Heart left ventricle (tissue), 16 donors: ENCODE measurements at regions of chr2 and their contacts with region 1.

Region 1: GRCh38 chr2:43219383-43220228 is 6.8 kb downstream of the ZFP36L2 start:
- DNase-seq: peak; percentile 91 to 95 (median 93)
- ATAC-seq: peak; percentile 66 to 86 (median 80)
- H3K4me3 ChIP-seq: peak overlapping the region; percentile 11 to 97 (median 80)
- H3K27ac ChIP-seq: peak overlapping the region; percentile 96 to 99 (median 99)
- H3K4me1 ChIP-seq: peaks cover 6 to 83% (median 61%) of the 10 kb centered on the region in 12 donors
- H3K27me3 ChIP-seq: no peaks in the 10 kb centered on the region
- CTCF ChIP-seq: peak in 3 of 12 donors; percentile 18 to 30 (median 25)
- POLR2A ChIP-seq: peak in 1 of 2 donors; percentile 43

Region 2: DNA sequence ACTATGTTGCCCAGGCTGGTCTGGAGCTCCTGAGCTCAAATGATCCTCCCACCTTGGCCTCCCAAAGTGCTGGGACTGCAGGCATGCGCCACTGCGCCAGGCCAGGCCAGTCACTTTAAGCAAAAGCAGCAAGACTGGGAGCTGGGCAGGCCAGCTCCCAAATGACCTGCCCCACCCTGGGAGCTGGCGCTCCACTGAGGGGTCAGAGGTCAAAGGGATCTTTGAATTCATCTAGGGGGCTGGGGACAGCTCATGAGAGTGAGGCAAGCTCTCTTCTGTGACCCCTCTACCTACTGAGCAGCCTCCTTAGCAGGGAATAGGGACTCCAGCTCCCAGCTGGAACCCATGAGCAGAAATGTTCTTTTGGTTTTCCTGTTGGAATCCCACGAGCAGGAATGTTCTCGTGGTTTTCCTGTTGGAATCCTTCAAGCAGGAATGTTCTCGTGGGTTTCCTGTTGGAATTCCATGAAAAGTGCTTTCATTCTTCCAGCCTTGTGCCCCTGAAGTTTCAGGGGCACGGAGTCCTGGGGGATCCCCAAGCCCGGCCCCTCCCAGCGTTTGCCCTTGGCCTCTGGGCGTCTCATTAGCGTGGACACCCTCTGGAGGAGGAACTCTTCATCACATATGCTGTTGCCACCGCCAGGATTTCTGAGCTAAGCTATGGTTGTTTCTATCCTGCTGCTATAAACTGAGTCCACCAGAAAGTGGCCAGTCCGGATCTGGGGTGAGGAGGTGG is 265.2 kb before region 1 on chr2:
- intact Hi-C with region 1: loop called in 1 of 10 experiments (anchors 5 kb)
- DNase-seq: peak in 1 of 5 donors; percentile 65
- ATAC-seq: peak in 3 of 4 donors; percentile 3 to 22 (median 11)
- H3K4me3 ChIP-seq: no peak overlapping the region
- H3K27ac ChIP-seq: peak overlapping the region; percentile 25 to 84 (median 62)
- H3K4me1 ChIP-seq: peaks cover 0 to 64% (median 44%) of the 10 kb centered on the region in 12 donors
- H3K27me3 ChIP-seq: no peaks in the 10 kb centered on the region
- CTCF ChIP-seq: peak in 2 of 12 donors; percentile 8 to 9
- POLR2A ChIP-seq: no peak

Region 3: DNA sequence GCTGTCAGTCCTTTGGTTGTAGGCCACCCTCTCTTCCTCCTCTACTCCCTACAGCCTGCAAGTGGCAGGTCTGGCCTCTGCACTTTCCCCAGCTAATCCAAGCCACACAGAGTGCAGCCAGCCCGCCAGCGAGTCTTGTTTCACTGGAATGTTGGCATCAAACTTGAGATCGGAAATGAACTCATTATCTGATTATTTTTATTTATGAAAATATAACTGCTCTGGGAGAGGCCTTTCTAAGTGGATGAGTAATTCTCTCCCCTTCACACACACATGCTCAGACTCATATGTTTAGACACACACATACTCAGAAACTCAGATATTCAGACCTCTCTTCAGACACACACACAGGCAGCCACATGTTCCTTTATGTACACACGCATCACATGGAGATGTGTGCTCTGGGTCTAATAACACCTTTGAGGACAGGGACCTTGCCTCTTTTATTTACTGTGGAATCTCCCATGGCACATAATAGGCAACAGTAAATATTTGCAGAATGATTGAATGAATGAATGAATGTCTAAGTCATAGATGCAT is 144.5 kb before region 1 on chr2:
- intact Hi-C with region 1: loop called in 3 of 10 experiments (anchors 5 to 10 kb)
- DNase-seq: peak; percentile 81 to 88 (median 86)
- ATAC-seq: peak; percentile 59 to 81 (median 80)
- H3K4me3 ChIP-seq: no peak overlapping the region
- H3K27ac ChIP-seq: peak overlapping the region; percentile 58 to 93 (median 76)
- H3K4me1 ChIP-seq: peaks cover 12 to 76% (median 56%) of the 10 kb centered on the region in 12 donors
- H3K27me3 ChIP-seq: no peaks in the 10 kb centered on the region
- CTCF ChIP-seq: peak in 3 of 12 donors; percentile 16 to 21 (median 20)
- POLR2A ChIP-seq: no peak

Region 4: DNA sequence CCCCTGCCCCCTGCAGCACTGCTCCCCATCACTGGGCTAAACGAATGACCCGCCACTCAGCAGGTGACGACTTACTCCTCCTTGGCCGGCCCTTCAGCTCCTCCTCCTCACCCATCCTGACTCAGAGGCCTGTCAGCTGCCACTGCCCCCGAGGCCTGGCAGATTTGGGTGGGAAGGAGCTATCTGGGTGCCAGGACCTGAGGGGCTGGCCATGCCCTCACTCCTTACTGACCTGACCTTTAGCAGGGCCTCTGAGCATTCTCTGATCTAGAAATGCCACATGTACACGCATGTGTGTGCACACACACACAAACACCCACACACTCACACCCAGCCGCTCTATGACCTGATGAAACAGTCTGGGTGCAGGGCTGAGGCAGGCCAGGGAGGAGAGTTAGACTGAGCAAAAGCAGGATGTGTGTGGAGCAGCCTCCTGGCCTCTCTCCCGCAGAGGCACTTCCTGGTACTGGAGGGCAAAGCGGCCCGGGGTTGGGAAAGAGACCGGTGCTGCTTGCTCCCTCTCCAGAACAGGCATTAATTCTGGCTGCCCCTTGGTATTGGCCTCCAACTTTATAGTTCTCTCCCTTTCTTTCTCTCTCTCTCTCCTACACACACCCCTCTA is 61.2 kb before region 1 on chr2:
- intact Hi-C with region 1: loop called in 4 of 10 experiments (anchors 1 to 10 kb)
- DNase-seq: peak; percentile 54 to 77 (median 73)
- ATAC-seq: peak; percentile 42 to 69 (median 68)
- H3K4me3 ChIP-seq: peak overlapping the region in 1 of 12 donors; percentile 10
- H3K27ac ChIP-seq: peak overlapping the region; percentile 55 to 91 (median 80)
- H3K4me1 ChIP-seq: peaks cover 8 to 49% (median 34%) of the 10 kb centered on the region in 12 donors
- H3K27me3 ChIP-seq: no peaks in the 10 kb centered on the region
- CTCF ChIP-seq: no peak
- POLR2A ChIP-seq: no peak

Region 5: DNA sequence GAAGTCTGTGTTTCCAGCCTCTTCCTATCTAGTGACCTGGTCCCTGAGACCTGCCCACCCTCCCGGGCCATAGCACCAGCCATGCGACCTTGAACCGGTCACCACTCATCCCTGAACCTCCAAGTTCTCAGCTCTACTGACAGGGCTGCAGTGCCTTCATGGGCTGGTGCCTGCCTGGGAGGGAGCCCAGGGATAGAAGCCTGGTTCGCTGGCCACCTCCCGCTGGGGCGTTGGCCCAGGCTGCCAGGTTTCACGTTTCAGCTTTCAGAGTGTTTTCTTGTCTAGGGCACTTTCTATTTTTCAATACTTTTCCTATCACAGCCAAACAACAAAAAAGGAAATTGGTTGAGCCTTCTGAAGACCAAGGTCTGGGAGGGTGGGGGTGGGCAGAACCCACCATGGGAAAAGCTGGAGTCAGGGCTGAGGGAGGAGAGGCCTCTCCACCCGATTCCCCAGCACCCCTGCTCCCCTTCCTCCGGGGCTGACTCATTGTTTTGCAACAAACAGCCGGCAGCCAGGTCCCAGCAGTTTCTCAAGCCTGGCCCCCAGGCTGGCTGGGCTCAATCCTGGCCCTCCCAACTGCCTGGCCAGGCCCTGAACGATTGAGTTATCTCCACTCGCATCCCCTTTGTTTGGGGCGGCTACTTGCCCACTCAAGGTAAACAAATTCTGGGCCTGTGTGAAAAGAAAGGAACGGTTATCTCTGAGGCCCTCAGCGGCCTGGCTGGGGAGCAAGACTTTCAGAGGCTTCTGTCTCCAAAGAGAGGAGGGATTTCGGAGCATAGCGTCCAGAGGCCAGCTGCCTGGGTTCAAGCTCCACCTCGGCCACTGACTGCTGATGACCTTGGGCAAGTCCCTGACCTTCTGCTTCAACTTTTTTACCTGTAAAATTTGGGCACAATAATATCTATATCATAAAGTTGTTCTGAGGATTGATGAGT is 40.7 kb before region 1 on chr2:
- intact Hi-C with region 1: loop called in 7 of 10 experiments (anchors 5 kb)
- DNase-seq: peak; percentile 70 to 85 (median 77)
- ATAC-seq: peak in 3 of 4 donors; percentile 82 to 93 (median 89)
- H3K4me3 ChIP-seq: no peak overlapping the region
- H3K27ac ChIP-seq: peak overlapping the region; percentile 49 to 85 (median 74)
- H3K4me1 ChIP-seq: peaks cover 0 to 51% (median 20%) of the 10 kb centered on the region in 12 donors
- H3K27me3 ChIP-seq: no peaks in the 10 kb centered on the region
- CTCF ChIP-seq: no peak
- POLR2A ChIP-seq: no peak